SK-N-SH (cell line): ENCODE measurements at regions of chr19 and their contacts with region 1.

Region 1: DNA sequence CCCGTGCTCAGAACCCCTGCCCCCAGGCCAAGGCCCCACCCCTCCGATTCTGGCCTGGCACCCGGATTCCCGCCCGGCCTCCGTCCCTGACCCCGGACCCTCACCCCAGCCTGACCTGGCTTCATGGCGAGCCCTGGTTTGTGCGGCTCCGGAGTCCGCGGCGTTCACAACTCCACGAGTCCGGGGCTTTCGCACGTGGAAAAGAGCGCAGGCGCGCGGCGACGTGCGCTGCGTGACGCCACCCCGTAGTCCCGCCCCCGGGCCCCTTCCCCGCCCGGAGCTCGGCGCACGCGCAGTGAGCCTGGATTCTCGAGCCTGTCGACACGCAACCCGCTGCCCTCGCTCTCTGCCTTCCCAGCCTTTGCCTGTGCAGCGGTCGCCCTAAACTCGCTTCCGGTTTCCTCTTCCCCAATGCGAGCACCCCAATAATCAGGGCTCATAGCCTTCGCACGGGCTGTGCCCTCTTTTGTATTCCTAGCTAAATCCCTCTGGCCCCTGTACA is at the start of gene FBL:
- DNase-seq: peak; percentile 98
- H3K4me3 ChIP-seq: peak within 1 kb of the TSS; percentile 62 to 80
- H3K27ac ChIP-seq: peak within 1 kb of the TSS; percentile 55 to 89; a peak in 3 of 4 replicates
- H3K4me1 ChIP-seq: peaks cover 8 to 25% of the 10 kb centered on the region in 2 experiments; a peak in 2 of 4 replicates
- H3K27me3 ChIP-seq: no peaks in the 10 kb centered on the region
- CTCF ChIP-seq: no peak
- EP300 ChIP-seq: no peak
- RAD21 ChIP-seq: no peak
- polyA plus RNA-seq, gene FBL: 340 and 371 TPM in 2 replicates

Region 2: DNA sequence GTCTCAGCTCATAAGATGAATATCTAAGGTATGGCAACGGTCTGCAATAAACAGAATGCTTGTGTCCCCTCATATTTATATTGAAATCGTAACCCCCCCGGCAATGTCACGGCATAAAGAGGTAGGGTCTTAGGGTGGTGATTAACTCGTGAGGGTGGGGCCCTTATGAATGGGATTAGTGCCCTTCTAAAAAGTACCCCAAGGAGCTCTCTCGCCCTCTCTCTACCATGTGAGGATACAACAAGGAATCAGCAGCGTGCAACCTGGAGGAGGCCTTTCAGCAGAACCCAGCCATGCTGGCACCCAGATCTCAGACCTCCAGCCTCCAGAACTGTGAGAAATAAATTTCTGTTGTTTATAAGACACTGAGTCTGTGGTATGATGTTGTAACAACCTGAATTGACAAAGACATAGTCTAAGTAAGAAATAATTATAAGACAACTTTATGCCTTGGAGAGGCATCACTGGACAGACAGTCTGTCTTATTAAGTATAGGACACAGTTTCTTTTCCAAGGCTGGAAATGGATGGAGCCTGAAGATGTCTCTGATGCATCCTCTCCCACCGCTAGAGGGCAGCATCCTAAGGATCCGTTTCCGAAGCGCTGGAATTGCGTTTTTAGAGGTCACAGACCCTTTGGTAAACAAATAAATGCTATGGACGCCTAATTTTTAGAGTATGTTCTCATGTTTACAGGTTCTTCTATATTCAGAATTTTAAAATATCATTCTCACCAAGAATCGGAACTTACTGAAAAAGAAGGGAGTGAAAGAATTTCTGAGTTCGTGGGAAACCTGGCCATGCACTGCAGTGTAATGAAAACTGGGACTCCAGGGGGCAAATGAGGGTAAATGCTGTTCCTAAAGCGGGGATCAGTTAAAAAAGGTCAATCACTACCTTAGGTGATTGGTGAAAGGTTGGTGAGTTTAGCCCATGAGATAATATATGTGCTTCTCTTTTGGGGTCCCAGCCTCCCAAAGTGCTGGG is 80.8 kb before region 1 on chr19:
- CTCF ChIA-PET with region 1: interaction called, 14 read pairs
- POLR2A ChIA-PET with region 1: no interaction called
- DNase-seq: peak; percentile 29
- H3K4me3 ChIP-seq: peak overlapping the region in 1 of 2 experiments; percentile 11; a peak in 1 of 4 replicates
- H3K27ac ChIP-seq: no peak overlapping the region
- H3K4me1 ChIP-seq: no peaks in the 10 kb centered on the region
- H3K27me3 ChIP-seq: peaks cover 19% of the 10 kb centered on the region; the same call in 1 of the 2 replicates
- CTCF ChIP-seq: peak; percentile 90
- EP300 ChIP-seq: no peak
- RAD21 ChIP-seq: no peak

Region 3: GRCh38 chr19:39792999-39793546 is 53.2 kb before region 1 on chr19:
- CTCF ChIA-PET with region 1: interaction called, 143 read pairs
- POLR2A ChIA-PET with region 1: no interaction called
- DNase-seq: peak; percentile 80
- H3K4me3 ChIP-seq: peak overlapping the region; percentile 54 to 65
- H3K27ac ChIP-seq: no peak overlapping the region
- H3K4me1 ChIP-seq: no peaks in the 10 kb centered on the region
- H3K27me3 ChIP-seq: peaks cover 25% of the 10 kb centered on the region; the same call in 1 of the 2 replicates
- CTCF ChIP-seq: peak; percentile 94
- EP300 ChIP-seq: no peak
- RAD21 ChIP-seq: peak; percentile 87

Region 4: DNA sequence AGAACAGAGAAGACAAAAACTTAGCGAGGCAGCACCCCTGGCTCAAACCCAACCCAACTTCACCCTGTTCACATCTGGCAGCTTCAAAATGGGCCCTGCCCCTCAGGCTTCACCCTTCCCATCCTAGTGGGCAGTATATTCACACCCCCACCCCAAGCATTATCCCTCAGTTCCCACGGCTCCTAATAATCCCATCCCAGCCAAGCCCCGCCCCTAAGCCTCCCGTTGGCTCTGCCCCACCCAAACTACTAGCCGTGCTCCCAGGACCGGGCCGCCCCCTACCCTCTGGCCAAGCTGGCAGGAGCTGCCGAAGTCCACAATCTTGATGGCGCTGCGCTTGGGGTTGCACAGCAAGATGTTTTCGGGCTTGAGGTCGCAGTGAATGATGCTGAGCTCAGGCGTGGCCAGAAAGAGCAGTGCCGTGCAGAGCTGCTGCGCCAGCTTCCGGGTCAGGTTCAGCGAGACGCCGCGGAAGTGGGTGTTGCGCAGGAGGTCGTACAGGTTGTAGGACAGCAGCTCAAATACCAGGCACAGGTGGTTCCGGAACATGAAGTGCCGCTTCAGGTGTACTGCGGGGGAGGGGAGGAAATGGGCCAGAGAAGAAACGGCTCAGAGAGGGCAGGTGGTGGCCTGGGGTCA is 18.1 kb before region 1 on chr19:
- CTCF ChIA-PET with region 1: interaction called, 26 read pairs
- POLR2A ChIA-PET with region 1: interaction called, 7 read pairs
- DNase-seq: no peak
- H3K4me3 ChIP-seq: no peak overlapping the region
- H3K27ac ChIP-seq: no peak overlapping the region
- H3K4me1 ChIP-seq: peaks cover 0 to 19% of the 10 kb centered on the region in 2 experiments; a peak in 2 of 4 replicates
- H3K27me3 ChIP-seq: no peaks in the 10 kb centered on the region
- CTCF ChIP-seq: no peak
- EP300 ChIP-seq: no peak
- RAD21 ChIP-seq: no peak

Region 5: GRCh38 chr19:39858541-39858940 is 12.3 kb after region 1 on chr19:
- CTCF ChIA-PET with region 1: interaction called, 14 read pairs
- POLR2A ChIA-PET with region 1: no interaction called
- DNase-seq: no peak
- H3K4me3 ChIP-seq: no peak overlapping the region
- H3K27ac ChIP-seq: no peak overlapping the region
- H3K4me1 ChIP-seq: no peaks in the 10 kb centered on the region
- H3K27me3 ChIP-seq: peaks cover 9% of the 10 kb centered on the region; the same call in 1 of the 2 replicates
- CTCF ChIP-seq: no peak
- EP300 ChIP-seq: no peak
- RAD21 ChIP-seq: no peak